ENCODE measurements at regions of chr10 and their contacts with region 1.

Region 1: GRCh38 chr10:22816298-22816653 is 101.9 kb upstream of the PIP4K2A start:
- DNase-seq: peak; percentile 92
- H3K4me3 Mint-ChIP-seq: peak overlapping the region; percentile 38
- H3K27ac Mint-ChIP-seq: peak overlapping the region; percentile 97
- H3K4me1 Mint-ChIP-seq: peaks cover 16% of the 10 kb centered on the region
- H3K27me3 Mint-ChIP-seq: no peaks in the 10 kb centered on the region
- CTCF ChIP-seq: no peak

Region 2: GRCh38 chr10:22742678-22743077 is 73.6 kb before region 1 on chr10:
- CTCF ChIA-PET with region 1: no interaction called
- POLR2A ChIA-PET with region 1: no interaction called
- intact Hi-C with region 1: loop called (anchors 2 kb)
- DNase-seq: no peak
- H3K4me3 Mint-ChIP-seq: no peak overlapping the region
- H3K27ac Mint-ChIP-seq: no peak overlapping the region
- H3K4me1 Mint-ChIP-seq: no peaks in the 10 kb centered on the region
- H3K27me3 Mint-ChIP-seq: no peaks in the 10 kb centered on the region
- CTCF ChIP-seq: no peak

Region 3: DNA sequence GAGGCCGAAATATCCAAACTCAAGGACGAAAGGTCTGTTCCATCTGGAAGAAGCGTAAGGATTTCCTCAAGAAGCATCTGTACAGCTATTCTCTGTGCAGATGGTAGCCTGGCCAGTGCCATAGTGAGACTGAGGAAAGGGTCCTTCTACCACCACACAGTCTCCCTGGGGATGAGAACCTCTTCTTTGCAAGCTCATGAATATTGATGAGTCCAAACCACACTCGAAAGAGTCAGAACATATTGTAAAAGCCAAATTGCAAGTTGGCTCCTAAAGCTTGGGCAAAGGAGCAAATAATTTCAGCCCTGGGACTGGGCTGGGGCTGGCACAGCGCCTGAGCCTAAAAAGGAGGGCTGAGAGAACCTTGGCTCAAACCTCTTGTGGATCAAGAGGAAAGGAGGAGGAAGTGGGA is 35.8 kb before region 1 on chr10:
- CTCF ChIA-PET with region 1: no interaction called
- POLR2A ChIA-PET with region 1: no interaction called
- intact Hi-C with region 1: no loop called
- DNase-seq: no peak
- H3K4me3 Mint-ChIP-seq: no peak overlapping the region
- H3K27ac Mint-ChIP-seq: no peak overlapping the region
- H3K4me1 Mint-ChIP-seq: no peaks in the 10 kb centered on the region
- H3K27me3 Mint-ChIP-seq: no peaks in the 10 kb centered on the region
- CTCF ChIP-seq: no peak

Measured in MCF 10A (cell line).